ENCODE measurements at regions of chr13 and their contacts with region 1.

Region 1: DNA sequence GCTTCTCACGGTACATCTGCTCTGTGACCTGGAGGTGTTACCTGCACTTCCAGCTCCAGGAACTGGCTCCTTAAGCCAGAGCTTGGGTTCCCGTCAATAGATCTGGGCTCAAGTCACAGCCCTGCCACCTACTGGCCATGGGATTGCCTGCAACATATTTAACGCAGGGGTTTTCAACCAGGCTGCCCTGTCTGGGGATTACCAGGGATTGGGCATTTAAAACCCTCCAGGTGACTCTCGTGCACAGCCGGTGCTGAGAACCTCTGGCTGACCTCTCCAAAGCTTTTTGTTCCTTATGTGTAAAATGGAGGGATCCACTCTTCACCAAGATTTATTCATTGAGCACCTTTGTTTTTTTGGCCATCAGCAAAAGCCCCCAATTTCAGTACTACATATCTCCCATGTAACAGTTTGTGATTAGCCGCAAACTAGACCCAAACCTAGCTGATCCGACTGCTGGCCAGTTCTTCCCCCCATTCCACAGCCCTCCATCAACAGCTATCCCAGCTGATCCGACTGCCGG is 76.6 kb upstream of the STK24 start:
- DNase-seq: peak; percentile 55
- ATAC-seq: peak; percentile 96
- H3K4me3 Mint-ChIP-seq: no peak overlapping the region
- H3K27ac Mint-ChIP-seq: no peak overlapping the region
- H3K4me1 Mint-ChIP-seq: peaks cover 5% of the 10 kb centered on the region
- H3K27me3 Mint-ChIP-seq: peaks cover 2% of the 10 kb centered on the region
- CTCF ChIP-seq: peak; percentile 62

Region 2: GRCh38 chr13:98445340-98446233 is 207.9 kb before region 1 on chr13:
- CTCF ChIA-PET with region 1: interaction called, 155 read pairs
- POLR2A ChIA-PET with region 1: interaction called, 10 read pairs
- intact Hi-C with region 1: loop called (anchors 1 kb)
- DNase-seq: peak; percentile 71
- ATAC-seq: peak; percentile 98
- H3K4me3 Mint-ChIP-seq: peak overlapping the region; percentile 38
- H3K27ac Mint-ChIP-seq: peak overlapping the region; percentile 76
- H3K4me1 Mint-ChIP-seq: peaks cover 9% of the 10 kb centered on the region
- H3K27me3 Mint-ChIP-seq: no peaks in the 10 kb centered on the region
- CTCF ChIP-seq: peak; percentile 87

Region 3: DNA sequence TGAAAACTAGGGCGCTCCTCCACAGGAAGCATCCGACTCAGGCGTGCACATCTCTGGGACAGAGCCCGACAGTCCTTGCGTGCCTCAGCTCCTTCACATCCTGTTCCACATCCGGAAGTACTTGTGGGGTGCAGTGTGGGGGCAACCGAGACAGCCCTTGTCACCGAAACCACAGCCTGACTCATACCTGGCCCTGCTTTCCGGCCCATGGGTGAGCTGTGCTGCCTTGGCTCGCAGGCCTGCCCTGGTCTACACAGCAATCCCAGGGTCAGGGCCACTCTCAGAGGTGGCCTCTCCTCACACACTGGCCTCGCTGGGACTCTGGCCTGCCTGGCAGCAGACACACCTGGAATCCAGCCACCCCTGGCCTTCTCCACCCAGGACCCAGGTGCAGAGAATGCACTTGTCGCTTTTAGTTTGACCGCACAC is 177.0 kb before region 1 on chr13:
- CTCF ChIA-PET with region 1: interaction called, 17 read pairs
- POLR2A ChIA-PET with region 1: no interaction called
- intact Hi-C with region 1: loop called (anchors 2 kb)
- DNase-seq: peak; percentile 60
- ATAC-seq: peak; percentile 92
- H3K4me3 Mint-ChIP-seq: peak overlapping the region; percentile 76
- H3K27ac Mint-ChIP-seq: peak overlapping the region; percentile 94
- H3K4me1 Mint-ChIP-seq: peaks cover 50% of the 10 kb centered on the region
- H3K27me3 Mint-ChIP-seq: no peaks in the 10 kb centered on the region
- CTCF ChIP-seq: no peak

Region 4: GRCh38 chr13:98509271-98510155 is 144.0 kb before region 1 on chr13:
- CTCF ChIA-PET with region 1: interaction called, 16 read pairs
- POLR2A ChIA-PET with region 1: no interaction called
- intact Hi-C with region 1: no loop called
- DNase-seq: no peak
- ATAC-seq: peak; percentile 84
- H3K4me3 Mint-ChIP-seq: peak overlapping the region; percentile 71
- H3K27ac Mint-ChIP-seq: peak overlapping the region; percentile 96
- H3K4me1 Mint-ChIP-seq: peaks cover 100% of the 10 kb centered on the region
- H3K27me3 Mint-ChIP-seq: no peaks in the 10 kb centered on the region
- CTCF ChIP-seq: no peak

Region 5: DNA sequence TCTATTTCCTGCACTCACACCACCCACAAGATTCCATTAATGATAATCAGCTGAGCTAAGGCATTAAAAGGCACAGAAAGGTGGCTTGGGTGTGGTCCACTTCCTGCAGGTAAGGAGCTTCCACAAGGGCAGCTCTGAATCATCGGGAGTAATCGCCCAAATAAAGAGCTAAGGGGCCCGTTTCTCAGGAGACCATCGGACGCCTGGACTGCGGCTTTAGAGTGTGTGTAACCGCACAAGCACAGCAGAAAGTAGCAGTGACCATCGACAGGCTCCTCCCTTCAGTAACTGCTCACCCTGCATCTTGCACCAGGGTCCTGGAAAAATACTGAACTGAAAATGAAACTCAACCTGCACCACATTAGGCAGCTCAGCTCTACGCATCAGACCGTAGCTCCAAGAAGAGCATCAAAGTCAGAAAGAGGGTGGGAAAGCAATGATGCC is 82.6 kb before region 1 on chr13:
- CTCF ChIA-PET with region 1: interaction called, 6 read pairs
- POLR2A ChIA-PET with region 1: no interaction called
- intact Hi-C with region 1: loop called (anchors 2 kb)
- DNase-seq: peak; percentile 39
- ATAC-seq: peak; percentile 84
- H3K4me3 Mint-ChIP-seq: peak overlapping the region; percentile 82
- H3K27ac Mint-ChIP-seq: peak overlapping the region; percentile 91
- H3K4me1 Mint-ChIP-seq: peaks cover 99% of the 10 kb centered on the region
- H3K27me3 Mint-ChIP-seq: no peaks in the 10 kb centered on the region
- CTCF ChIP-seq: no peak

Region 6: DNA sequence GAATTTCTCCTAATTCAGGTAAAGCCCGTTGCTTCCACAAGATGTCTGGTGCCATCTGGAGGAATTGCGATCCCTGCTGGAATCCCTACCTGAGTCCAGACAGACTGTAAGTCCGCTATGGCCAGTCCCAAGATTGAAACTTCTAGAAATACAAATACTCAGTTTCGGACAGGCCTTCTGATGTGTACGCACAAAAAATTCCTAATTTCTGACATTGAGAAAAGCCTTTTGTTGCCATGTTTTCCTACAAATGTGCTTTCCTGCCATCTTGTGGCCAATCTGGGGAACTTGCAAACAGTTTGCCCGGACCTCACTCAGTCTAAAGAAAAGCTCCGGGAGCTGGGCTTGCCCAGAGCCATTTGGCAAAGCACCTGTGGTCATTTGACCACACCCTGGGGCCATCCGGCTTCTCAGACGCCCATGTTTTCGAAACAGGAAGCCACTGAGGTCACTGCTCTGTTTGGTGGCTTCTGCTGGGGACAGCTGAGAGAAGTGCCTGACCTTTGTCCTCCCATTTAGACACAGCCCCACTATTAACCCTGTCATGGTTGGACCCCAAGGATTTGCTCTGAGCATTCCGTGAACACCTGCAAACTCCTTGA is 19.5 kb after region 1 on chr13:
- CTCF ChIA-PET with region 1: interaction called, 15 read pairs
- POLR2A ChIA-PET with region 1: no interaction called
- intact Hi-C with region 1: loop called (anchors 1 kb)
- DNase-seq: peak; percentile 19
- ATAC-seq: peak; percentile 56
- H3K4me3 Mint-ChIP-seq: no peak overlapping the region
- H3K27ac Mint-ChIP-seq: no peak overlapping the region
- H3K4me1 Mint-ChIP-seq: no peaks in the 10 kb centered on the region
- H3K27me3 Mint-ChIP-seq: peaks cover 7% of the 10 kb centered on the region
- CTCF ChIP-seq: peak; percentile 84

Region 7: DNA sequence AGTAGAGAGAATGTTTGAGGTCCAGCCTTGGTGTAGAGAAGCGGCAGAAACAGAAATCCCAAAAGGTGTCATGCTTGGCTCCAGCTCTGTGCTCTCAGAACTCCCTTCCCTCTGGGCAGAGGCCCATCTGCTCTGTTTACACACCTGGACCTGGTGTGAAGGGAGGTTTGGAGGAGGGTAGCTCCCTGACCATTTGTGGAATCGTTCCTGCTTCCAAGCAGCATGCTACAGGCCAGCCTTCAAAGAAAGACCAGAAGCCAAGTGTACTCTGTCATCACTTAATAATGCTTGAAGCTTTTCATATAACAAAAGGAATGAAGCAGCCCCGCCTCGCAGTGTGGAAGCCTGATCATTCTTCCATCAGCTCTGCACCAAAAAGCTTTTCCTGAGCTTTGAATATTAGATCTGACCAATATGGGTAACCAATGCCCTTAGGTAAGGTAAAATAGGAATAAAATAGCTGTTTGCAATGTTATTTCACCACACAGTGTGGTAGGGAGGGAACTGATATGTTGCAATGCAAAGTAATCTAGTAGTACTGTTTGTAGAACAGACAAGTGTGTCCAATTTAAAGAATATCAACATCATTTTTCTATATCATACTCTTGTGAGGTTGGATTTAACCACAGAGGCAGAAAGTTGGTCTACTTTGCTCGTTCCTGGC is 1254.7 kb after region 1 on chr13:
- CTCF ChIA-PET with region 1: no interaction called
- POLR2A ChIA-PET with region 1: no interaction called
- intact Hi-C with region 1: no loop called
- DNase-seq: no peak
- ATAC-seq: no peak
- H3K4me3 Mint-ChIP-seq: no peak overlapping the region
- H3K27ac Mint-ChIP-seq: no peak overlapping the region
- H3K4me1 Mint-ChIP-seq: no peaks in the 10 kb centered on the region
- H3K27me3 Mint-ChIP-seq: peaks cover 44% of the 10 kb centered on the region
- CTCF ChIP-seq: no peak